ENCODE measurements at regions of chr13 and their contacts with region 1.

Region 1: GRCh38 chr13:28138012-28138755 is at the start of gene PAN3:
- DNase-seq: peak; percentile 95
- H3K4me3 ChIP-seq: peak within 1 kb of the TSS; percentile 100
- H3K27ac ChIP-seq: peak within 1 kb of the TSS; percentile 95
- H3K4me1 ChIP-seq: peaks cover 18% of the 10 kb centered on the region
- CTCF ChIP-seq: peak; percentile 38
- total RNA-seq, gene PAN3: 18.4 and 20.4 TPM in 2 replicates

Region 2: GRCh38 chr13:28047757-28048388 is 90.3 kb before region 1 on chr13:
- CTCF ChIA-PET with region 1: no interaction called
- POLR2A ChIA-PET with region 1: no interaction called
- intact Hi-C with region 1: loop called (anchors 2 kb)
- DNase-seq: peak; percentile 72
- H3K4me3 ChIP-seq: peak overlapping the region; percentile 14
- H3K27ac ChIP-seq: peak overlapping the region; percentile 72
- H3K4me1 ChIP-seq: peaks cover 38% of the 10 kb centered on the region
- CTCF ChIP-seq: no peak

Region 3: GRCh38 chr13:28268800-28269223 is 130.6 kb after region 1 on chr13:
- CTCF ChIA-PET with region 1: no interaction called
- POLR2A ChIA-PET with region 1: no interaction called
- intact Hi-C with region 1: loop called (anchors 2 kb)
- DNase-seq: peak; percentile 88
- H3K4me3 ChIP-seq: peak overlapping the region; percentile 24
- H3K27ac ChIP-seq: peak overlapping the region; percentile 92
- H3K4me1 ChIP-seq: peaks cover 45% of the 10 kb centered on the region
- CTCF ChIP-seq: 0 out of 2 replicates have a peak, but pooled peaks have one; percentile 32

Region 4: DNA sequence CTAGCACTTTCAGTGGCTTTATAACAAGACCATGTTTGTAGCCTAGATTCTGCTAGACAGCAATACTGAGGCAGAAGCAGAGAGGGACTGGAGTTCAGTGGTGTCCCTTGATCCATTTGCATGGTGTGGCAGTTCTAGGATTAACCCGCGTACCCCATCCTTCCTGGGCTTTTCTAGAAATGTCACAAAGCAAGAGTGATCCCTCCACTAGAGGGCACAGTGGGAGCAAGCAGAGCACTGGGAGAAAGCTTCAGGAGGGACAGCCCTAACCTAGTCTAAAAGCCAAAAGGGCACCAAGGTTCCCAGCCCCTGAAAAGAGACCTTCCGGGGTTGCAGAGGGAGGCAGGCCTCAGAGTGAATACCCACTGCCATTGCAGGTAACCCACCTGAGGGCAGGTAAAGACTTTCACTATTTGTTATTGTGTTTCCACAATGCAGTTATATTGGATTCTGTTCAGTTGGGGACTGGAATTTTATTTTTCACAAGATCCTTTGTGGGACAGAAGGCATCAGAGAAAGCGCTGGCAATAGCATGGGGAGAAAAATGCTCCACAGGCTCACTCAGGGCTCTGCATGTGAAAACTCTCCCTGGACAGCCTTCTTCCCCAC is 186.1 kb after region 1 on chr13:
- CTCF ChIA-PET with region 1: no interaction called
- POLR2A ChIA-PET with region 1: no interaction called
- intact Hi-C with region 1: loop called (anchors 5 kb)
- DNase-seq: peak; percentile 76
- H3K4me3 ChIP-seq: no peak overlapping the region
- H3K27ac ChIP-seq: no peak overlapping the region
- H3K4me1 ChIP-seq: no peaks in the 10 kb centered on the region
- CTCF ChIP-seq: peak; percentile 87

Region 5: DNA sequence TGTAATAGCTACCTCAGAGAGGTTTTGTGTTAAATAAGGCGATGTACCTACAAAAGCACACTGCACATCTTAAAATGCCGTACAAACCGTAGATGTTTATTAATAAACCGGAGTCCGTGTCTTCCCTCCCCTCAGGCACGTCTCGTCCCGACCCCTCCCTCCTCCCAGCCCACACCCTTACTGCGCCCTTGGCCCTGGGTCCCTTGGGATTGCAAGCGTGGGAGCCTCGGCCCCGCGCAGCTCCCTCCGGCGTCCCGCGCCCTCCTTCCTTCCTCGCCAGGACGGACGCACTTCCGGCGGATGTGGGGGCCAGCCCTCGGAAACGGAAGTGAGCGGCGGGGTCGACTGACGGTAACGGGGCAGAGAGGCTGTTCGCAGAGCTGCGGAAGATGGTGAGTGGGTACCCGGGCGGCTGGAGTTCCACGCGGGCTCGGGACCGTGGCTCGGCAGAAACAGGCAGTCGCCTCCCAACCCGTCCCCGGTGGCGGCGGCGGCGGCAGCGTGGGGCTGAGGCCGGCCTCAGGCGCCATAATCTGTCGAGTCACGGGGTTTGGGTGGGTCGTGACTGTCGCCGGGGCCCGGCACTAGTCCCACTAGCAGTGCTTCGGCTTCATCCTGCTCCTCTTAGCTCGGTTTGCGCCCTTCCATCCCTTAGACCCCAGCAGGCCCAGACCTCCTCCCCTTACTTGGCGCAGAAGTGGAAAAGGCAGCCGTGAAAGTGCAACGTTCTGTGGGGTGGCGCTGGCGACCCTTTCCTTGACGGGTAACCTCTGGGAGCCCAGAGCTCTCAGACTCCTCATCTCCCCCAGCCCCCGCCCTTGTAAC is 520.8 kb after region 1 on chr13 and contains the start of gene POMP:
- CTCF ChIA-PET with region 1: no interaction called
- POLR2A ChIA-PET with region 1: interaction called, 6 read pairs
- intact Hi-C with region 1: loop called (anchors 1 kb)
- DNase-seq: peak; percentile 93
- H3K4me3 ChIP-seq: peak within 1 kb of the TSS; percentile 83
- H3K27ac ChIP-seq: peak within 1 kb of the TSS; percentile 68
- H3K4me1 ChIP-seq: peaks cover 22% of the 10 kb centered on the region
- CTCF ChIP-seq: peak; percentile 43; the same call in 1 of the 2 replicates
- total RNA-seq, gene POMP: 46.6 and 46.7 TPM in 2 replicates